HepG2 (cell line): ENCODE measurements at regions of chr14 and their contacts with region 1.

Region 1: GRCh38 chr14:37864861-37865718 is 269.7 kb downstream of the TTC6 start:
- DNase-seq: peak; percentile 100
- ATAC-seq: peak; percentile 92
- H3K4me3 ChIP-seq: peak overlapping the region; percentile 18 to 56 (median 47)
- H3K27ac ChIP-seq: peak overlapping the region; percentile 82
- H3K4me1 ChIP-seq: peaks cover 63% of the 10 kb centered on the region
- H3K27me3 ChIP-seq: no peaks in the 10 kb centered on the region
- CTCF ChIP-seq: peak; percentile 72
- EP300 ChIP-seq: peak; percentile 99
- POLR2A ChIP-seq: peak; percentile 48 to 75
- RAD21 ChIP-seq: peak; percentile 77

Region 2: GRCh38 chr14:37237094-37237493 is 628.0 kb before region 1 on chr14:
- CTCF ChIA-PET with region 1: no interaction called
- POLR2A ChIA-PET with region 1: interaction called, 11 read pairs
- in situ Hi-C with region 1: no loop called
- intact Hi-C with region 1: no loop called
- DNase-seq: no peak
- ATAC-seq: peak; percentile 70
- H3K4me3 ChIP-seq: no peak overlapping the region
- H3K27ac ChIP-seq: peak overlapping the region; percentile 39
- H3K4me1 ChIP-seq: peaks cover 27% of the 10 kb centered on the region
- H3K27me3 ChIP-seq: no peaks in the 10 kb centered on the region
- CTCF ChIP-seq: no peak
- EP300 ChIP-seq: no peak
- POLR2A ChIP-seq: no peak
- RAD21 ChIP-seq: no peak

Region 3: DNA sequence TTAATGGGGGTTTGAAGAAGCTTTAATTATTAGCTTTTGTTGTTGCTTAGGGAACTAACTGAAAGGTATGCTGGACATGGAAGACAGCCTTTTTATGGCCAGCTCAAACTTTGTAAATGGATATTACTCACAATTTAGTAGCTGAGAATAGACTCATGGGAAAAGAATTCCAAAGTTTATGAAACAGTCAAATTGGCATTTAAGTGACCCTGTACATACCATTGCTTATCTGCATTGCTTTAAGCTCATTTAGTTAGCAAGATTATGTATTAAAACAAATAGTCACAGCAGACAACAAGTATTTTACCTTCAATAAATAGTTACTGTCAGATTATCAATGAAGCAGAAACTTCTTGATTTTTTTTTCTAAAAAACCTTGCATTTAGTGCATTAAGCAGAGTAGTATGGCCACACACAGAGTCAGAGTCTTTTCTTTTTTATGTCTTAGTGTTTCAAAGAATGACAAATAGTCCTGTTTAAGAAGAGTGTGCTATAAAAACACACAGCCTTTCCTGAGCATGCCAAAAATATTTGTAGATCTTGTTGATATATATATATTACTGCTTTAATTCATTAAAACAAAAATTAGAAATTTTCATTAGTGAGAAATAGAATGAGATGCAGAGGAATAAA is 167.5 kb before region 1 on chr14:
- CTCF ChIA-PET with region 1: no interaction called
- POLR2A ChIA-PET with region 1: interaction called, 17 read pairs
- in situ Hi-C with region 1: no loop called
- intact Hi-C with region 1: no loop called
- DNase-seq: peak; percentile 96
- ATAC-seq: peak; percentile 85
- H3K4me3 ChIP-seq: no peak overlapping the region; a peak in 1 of 6 replicates
- H3K27ac ChIP-seq: peak overlapping the region; percentile 46
- H3K4me1 ChIP-seq: peaks cover 34% of the 10 kb centered on the region
- H3K27me3 ChIP-seq: no peaks in the 10 kb centered on the region
- CTCF ChIP-seq: no peak
- EP300 ChIP-seq: peak in 1 of 2 experiments; percentile 82; a peak in 2 of 4 replicates
- POLR2A ChIP-seq: no peak
- RAD21 ChIP-seq: no peak

Region 4: DNA sequence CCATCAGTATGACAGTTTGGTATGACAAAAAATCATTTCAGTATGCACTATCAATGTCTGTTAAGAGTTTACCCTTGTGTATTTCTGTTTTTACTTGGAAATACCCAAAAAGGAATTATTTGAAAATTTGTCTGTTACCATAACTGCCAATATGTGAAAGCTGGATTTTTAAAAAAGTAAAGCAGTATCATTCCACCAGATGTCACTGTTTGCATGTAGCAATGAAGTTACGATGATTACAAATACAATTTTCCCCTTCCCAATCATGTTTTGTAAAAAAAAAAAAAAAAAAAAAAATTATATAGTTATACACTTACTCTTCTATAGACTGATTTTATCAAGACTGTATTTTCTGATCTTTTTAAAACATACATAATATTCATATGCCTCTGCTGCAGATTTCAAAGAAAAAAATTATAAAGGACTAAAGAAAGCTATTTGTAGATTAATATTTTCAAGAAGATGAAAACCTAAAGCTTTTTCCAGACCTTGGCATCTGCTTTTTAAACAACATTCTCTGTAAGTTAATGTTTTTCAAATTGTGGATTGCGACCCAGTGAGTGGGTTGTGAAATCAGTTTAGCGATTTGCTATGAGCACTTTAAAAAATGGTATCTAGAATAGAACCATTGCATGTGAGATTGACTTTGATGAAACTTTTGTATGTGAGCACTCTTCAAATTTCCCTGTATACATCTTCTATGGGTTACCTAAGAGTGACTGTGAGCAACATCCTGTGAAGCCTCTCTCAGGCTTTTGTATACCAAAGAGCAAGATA is 155.5 kb before region 1 on chr14:
- CTCF ChIA-PET with region 1: no interaction called
- POLR2A ChIA-PET with region 1: interaction called, 83 read pairs
- in situ Hi-C with region 1: loop called (anchors 5 kb)
- intact Hi-C with region 1: no loop called
- DNase-seq: peak; percentile 70
- ATAC-seq: no peak
- H3K4me3 ChIP-seq: no peak overlapping the region
- H3K27ac ChIP-seq: no peak overlapping the region
- H3K4me1 ChIP-seq: peaks cover 39% of the 10 kb centered on the region
- H3K27me3 ChIP-seq: no peaks in the 10 kb centered on the region
- CTCF ChIP-seq: peak; percentile 75
- EP300 ChIP-seq: no peak
- POLR2A ChIP-seq: no peak
- RAD21 ChIP-seq: peak; percentile 80

Region 5: GRCh38 chr14:37721976-37722659 is 143.0 kb before region 1 on chr14:
- CTCF ChIA-PET with region 1: no interaction called
- POLR2A ChIA-PET with region 1: interaction called, 10 read pairs
- in situ Hi-C with region 1: no loop called
- intact Hi-C with region 1: no loop called
- DNase-seq: peak; percentile 85
- ATAC-seq: peak; percentile 97
- H3K4me3 ChIP-seq: no peak overlapping the region
- H3K27ac ChIP-seq: no peak overlapping the region
- H3K4me1 ChIP-seq: peaks cover 7% of the 10 kb centered on the region
- H3K27me3 ChIP-seq: no peaks in the 10 kb centered on the region
- CTCF ChIP-seq: no peak
- EP300 ChIP-seq: peak in 1 of 2 experiments; percentile 49; a peak in 1 of 4 replicates
- POLR2A ChIP-seq: no peak
- RAD21 ChIP-seq: no peak

Region 6: GRCh38 chr14:37791384-37792036 is 73.6 kb before region 1 on chr14:
- CTCF ChIA-PET with region 1: no interaction called
- POLR2A ChIA-PET with region 1: interaction called, 35 read pairs
- in situ Hi-C with region 1: no loop called
- intact Hi-C with region 1: loop called (anchors 1 kb)
- DNase-seq: peak; percentile 94
- ATAC-seq: peak; percentile 54
- H3K4me3 ChIP-seq: no peak overlapping the region
- H3K27ac ChIP-seq: peak overlapping the region; percentile 55
- H3K4me1 ChIP-seq: peaks cover 39% of the 10 kb centered on the region
- H3K27me3 ChIP-seq: no peaks in the 10 kb centered on the region
- CTCF ChIP-seq: no peak
- EP300 ChIP-seq: peak in 1 of 2 experiments; percentile 96; a peak in 2 of 4 replicates
- POLR2A ChIP-seq: no peak
- RAD21 ChIP-seq: no peak

Region 7: GRCh38 chr14:37819155-37820015 is 45.7 kb before region 1 on chr14:
- CTCF ChIA-PET with region 1: no interaction called
- POLR2A ChIA-PET with region 1: interaction called, 13 read pairs
- in situ Hi-C with region 1: no loop called
- intact Hi-C with region 1: loop called (anchors 1 kb)
- DNase-seq: peak; percentile 97
- ATAC-seq: peak; percentile 76
- H3K4me3 ChIP-seq: no peak overlapping the region
- H3K27ac ChIP-seq: peak overlapping the region; percentile 73
- H3K4me1 ChIP-seq: peaks cover 44% of the 10 kb centered on the region
- H3K27me3 ChIP-seq: no peaks in the 10 kb centered on the region
- CTCF ChIP-seq: no peak
- EP300 ChIP-seq: peak; percentile 74 to 92; a peak in 3 of 4 replicates
- POLR2A ChIP-seq: no peak
- RAD21 ChIP-seq: no peak